Heart left ventricle (tissue), 16 donors: ENCODE measurements at regions of chr20 and their contacts with region 1.

Region 1: DNA sequence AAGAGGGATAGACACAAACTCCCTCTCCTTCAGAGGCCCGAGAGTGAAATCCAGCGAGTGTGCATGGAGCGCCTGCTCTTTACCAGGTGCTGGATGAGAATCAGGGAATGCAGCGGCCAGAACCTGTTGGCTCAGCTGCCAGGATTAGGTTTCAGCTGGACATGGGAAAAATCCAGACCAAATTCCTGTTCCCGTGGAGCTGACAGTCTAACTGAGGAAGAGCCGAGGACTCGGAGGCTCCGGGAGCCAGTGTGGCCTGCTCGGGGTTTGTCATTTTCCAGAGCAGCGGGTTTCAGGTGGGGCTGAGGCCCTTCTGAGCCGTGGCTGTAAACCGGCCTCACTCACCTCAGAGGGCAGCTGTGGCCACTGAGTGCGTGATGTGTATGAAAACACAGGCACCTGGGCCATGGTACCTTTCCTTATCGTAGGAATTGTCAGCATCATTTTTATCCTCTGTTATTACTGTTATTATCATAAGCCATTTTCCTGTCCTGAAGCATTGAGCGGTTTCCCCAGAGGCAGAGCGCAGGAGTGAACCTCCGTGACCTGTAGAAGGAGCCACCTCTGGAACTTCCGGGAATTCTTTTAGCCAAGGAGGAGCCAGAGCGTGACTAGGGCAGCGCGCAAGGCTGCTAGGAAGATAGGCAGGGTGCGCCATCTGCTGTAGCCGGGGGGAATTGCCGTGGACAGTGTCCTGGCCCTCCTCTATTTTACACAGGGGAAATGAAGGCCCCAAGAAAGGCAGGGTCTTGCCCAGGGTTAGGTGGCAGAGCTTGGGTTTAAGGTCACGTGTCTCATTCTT is 27.3 kb downstream of the PKIG start:
- DNase-seq: peak; percentile 88 to 93 (median 89)
- ATAC-seq: peak; percentile 85 to 92 (median 91)
- H3K4me3 ChIP-seq: peak overlapping the region in 9 of 12 donors; percentile 11 to 41 (median 32)
- H3K27ac ChIP-seq: peak overlapping the region; percentile 45 to 91 (median 84)
- H3K4me1 ChIP-seq: peaks cover 8 to 70% (median 40%) of the 10 kb centered on the region in 12 donors
- H3K27me3 ChIP-seq: no peaks in the 10 kb centered on the region
- CTCF ChIP-seq: peak; percentile 92 to 100 (median 98)
- POLR2A ChIP-seq: no peak

Region 2: DNA sequence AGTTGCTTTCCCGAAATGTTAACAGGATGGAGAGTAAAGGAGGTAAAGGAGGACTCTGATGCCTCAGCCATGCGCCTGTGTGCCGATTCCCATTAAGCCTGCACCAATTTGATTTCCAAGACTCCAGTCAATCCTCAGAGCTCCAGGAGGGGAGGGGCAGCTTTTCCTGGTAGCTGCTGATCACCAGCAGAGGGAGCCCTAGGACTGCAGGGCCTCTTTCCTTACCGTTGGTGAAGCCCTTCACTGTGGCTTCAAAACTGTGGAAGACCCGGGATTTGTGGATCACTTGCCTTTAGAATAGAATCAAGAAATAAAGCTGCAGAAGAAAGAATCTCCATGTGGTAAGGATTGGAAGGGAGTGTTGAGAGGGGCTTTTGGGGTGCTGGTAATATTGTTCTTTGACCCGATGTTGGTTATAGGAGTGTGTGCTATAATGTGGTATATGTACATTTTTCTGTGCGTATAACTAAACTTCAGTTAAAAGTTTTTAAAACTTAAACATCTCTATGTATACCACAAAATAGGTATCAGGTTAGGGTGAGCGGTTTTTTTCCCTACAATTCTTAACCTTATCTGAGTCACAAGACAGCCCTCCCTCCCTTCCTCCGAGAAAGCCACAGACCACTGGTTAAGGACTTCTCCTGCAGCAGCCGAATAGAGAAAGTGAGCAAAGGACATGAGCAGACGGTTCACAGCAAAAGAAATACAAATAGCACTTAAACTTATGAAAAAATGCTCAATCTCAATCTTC is 392.2 kb before region 1 on chr20:
- intact Hi-C with region 1: loop called in 4 of 10 experiments (anchors 5 to 10 kb)
- DNase-seq: peak; percentile 64 to 84 (median 69)
- ATAC-seq: peak in 3 of 4 donors; percentile 76 to 81 (median 78)
- H3K4me3 ChIP-seq: peak overlapping the region in 11 of 12 donors; percentile 3 to 46 (median 33)
- H3K27ac ChIP-seq: peak overlapping the region in 10 of 12 donors; percentile 12 to 72 (median 41)
- H3K4me1 ChIP-seq: peaks cover 0 to 21% (median 11%) of the 10 kb centered on the region in 12 donors
- H3K27me3 ChIP-seq: no peaks in the 10 kb centered on the region
- CTCF ChIP-seq: peak; percentile 76 to 92 (median 86)
- POLR2A ChIP-seq: no peak

Region 3: GRCh38 chr20:44398303-44398702 is 211.4 kb before region 1 on chr20:
- intact Hi-C with region 1: loop called in 3 of 10 experiments (anchors 5 to 10 kb)
- DNase-seq: no peak
- ATAC-seq: no peak
- H3K4me3 ChIP-seq: no peak overlapping the region
- H3K27ac ChIP-seq: no peak overlapping the region
- H3K4me1 ChIP-seq: no peaks in the 10 kb centered on the region
- H3K27me3 ChIP-seq: peaks cover 0 to 10% (median 0%) of the 10 kb centered on the region in 9 donors
- CTCF ChIP-seq: no peak
- POLR2A ChIP-seq: no peak

Region 4: GRCh38 chr20:44532259-44532980 is 77.3 kb before region 1 on chr20:
- intact Hi-C with region 1: loop called (anchors 2 to 5 kb)
- DNase-seq: no peak
- ATAC-seq: peak in 2 of 4 donors; percentile 8 to 37
- H3K4me3 ChIP-seq: peak overlapping the region; percentile 45 to 99 (median 86)
- H3K27ac ChIP-seq: peak overlapping the region in 11 of 12 donors; percentile 17 to 87 (median 76)
- H3K4me1 ChIP-seq: peaks cover 0 to 32% (median 10%) of the 10 kb centered on the region in 12 donors
- H3K27me3 ChIP-seq: peaks cover 0 to 10% (median 0%) of the 10 kb centered on the region in 9 donors
- CTCF ChIP-seq: no peak
- POLR2A ChIP-seq: no peak

Region 5: GRCh38 chr20:44622501-44623270 is 13.0 kb after region 1 on chr20:
- intact Hi-C with region 1: no loop called
- DNase-seq: no peak
- ATAC-seq: peak in 2 of 4 donors; percentile 2 to 6
- H3K4me3 ChIP-seq: no peak overlapping the region
- H3K27ac ChIP-seq: peak overlapping the region in 1 of 12 donors; percentile 7
- H3K4me1 ChIP-seq: peaks cover 0 to 21% (median 7%) of the 10 kb centered on the region in 12 donors
- H3K27me3 ChIP-seq: no peaks in the 10 kb centered on the region
- CTCF ChIP-seq: no peak
- POLR2A ChIP-seq: no peak

Region 6: DNA sequence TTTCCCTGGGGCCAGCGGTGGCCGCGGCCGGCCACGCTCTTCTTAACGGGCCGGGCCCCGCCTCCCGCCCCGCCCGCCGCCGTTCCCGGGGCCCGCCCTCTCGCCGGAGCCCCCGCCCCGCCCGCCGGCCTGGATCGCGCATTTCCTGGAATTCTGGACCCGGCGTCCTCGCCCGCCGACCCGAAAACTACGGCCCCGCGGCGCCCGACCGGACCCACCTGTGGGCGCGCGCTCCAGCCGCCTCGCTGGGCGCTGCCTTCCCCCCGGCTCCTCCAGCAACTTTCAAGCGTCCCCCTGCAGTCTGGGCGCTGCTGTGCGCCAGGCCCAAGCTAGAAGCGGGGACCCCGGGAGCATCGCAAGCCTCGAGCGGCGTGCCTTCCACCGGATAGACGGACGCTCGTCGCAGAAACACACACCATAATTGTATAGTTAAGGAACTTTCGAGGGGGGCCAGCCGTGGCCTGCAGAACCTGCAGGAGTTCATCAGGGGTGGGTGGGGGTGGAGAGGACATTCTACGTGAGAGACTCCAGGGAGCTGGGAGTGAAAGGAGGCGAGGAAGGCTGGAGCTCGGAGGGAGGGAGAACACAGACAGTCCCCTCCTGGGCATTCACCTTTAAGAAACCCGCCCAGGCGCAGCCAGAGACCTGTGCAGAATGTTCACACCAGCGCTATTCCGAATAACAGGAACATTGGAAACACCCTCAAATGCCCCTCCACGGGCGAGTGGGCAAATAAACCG is 42.1 kb after region 1 on chr20 and contains the start of gene ADA:
- intact Hi-C with region 1: loop called in 1 of 10 experiments (anchors 5 kb)
- DNase-seq: peak; percentile 73 to 87 (median 78)
- ATAC-seq: peak; percentile 23 to 90 (median 77)
- H3K4me3 ChIP-seq: peak within 1 kb of the TSS; percentile 55 to 91 (median 78)
- H3K27ac ChIP-seq: peak within 1 kb of the TSS; percentile 64 to 96 (median 92)
- H3K4me1 ChIP-seq: peaks cover 0 to 52% (median 16%) of the 10 kb centered on the region in 12 donors
- H3K27me3 ChIP-seq: no peaks in the 10 kb centered on the region
- CTCF ChIP-seq: peak in 2 of 12 donors; percentile 6
- POLR2A ChIP-seq: peak in 1 of 2 donors; percentile 67
- total RNA-seq, gene ADA: 2.5 to 11.5 (median 6.0) TPM